CD8-positive, alpha-beta T cell (primary cell): ENCODE measurements at regions of chr13 and their contacts with region 1.

Region 1: GRCh38 chr13:46126552-46127357 is 21.9 kb upstream of the CPB2 start:
- DNase-seq: peak; percentile 45 to 82 (median 72)
- ATAC-seq: peak; percentile 95
- H3K4me3 ChIP-seq: no peak overlapping the region
- H3K4me3 Mint-ChIP-seq: no peak overlapping the region
- H3K27ac ChIP-seq: peak overlapping the region in 1 of 2 experiments; percentile 69
- H3K27ac Mint-ChIP-seq: peak overlapping the region; percentile 77
- H3K4me1 ChIP-seq: peaks cover 30% of the 10 kb centered on the region
- H3K4me1 Mint-ChIP-seq: peaks cover 55% of the 10 kb centered on the region
- H3K27me3 ChIP-seq: no peaks in the 10 kb centered on the region
- H3K27me3 Mint-ChIP-seq: no peaks in the 10 kb centered on the region
- CTCF ChIP-seq: peak; percentile 80

Region 2: GRCh38 chr13:45511310-45512097 is 615.3 kb before region 1 on chr13:
- CTCF ChIA-PET with region 1: no interaction called
- POLR2A ChIA-PET with region 1: no interaction called
- intact Hi-C with region 1: loop called (anchors 5 to 10 kb)
- DNase-seq: peak in 5 of 9 experiments; percentile 20 to 80 (median 26)
- ATAC-seq: peak; percentile 95
- H3K4me3 ChIP-seq: no peak overlapping the region
- H3K4me3 Mint-ChIP-seq: no peak overlapping the region
- H3K27ac ChIP-seq: no peak overlapping the region
- H3K27ac Mint-ChIP-seq: peak overlapping the region; percentile 52
- H3K4me1 ChIP-seq: no peaks in the 10 kb centered on the region
- H3K4me1 Mint-ChIP-seq: peaks cover 8% of the 10 kb centered on the region
- H3K27me3 ChIP-seq: no peaks in the 10 kb centered on the region
- H3K27me3 Mint-ChIP-seq: no peaks in the 10 kb centered on the region
- CTCF ChIP-seq: peak; percentile 85

Region 3: GRCh38 chr13:45807520-45808099 is 319.1 kb before region 1 on chr13:
- CTCF ChIA-PET with region 1: interaction called, 5 read pairs
- POLR2A ChIA-PET with region 1: no interaction called
- intact Hi-C with region 1: loop called (anchors 1 to 2 kb)
- DNase-seq: peak in 4 of 9 experiments; percentile 26 to 54 (median 39)
- ATAC-seq: peak; percentile 54
- H3K4me3 ChIP-seq: no peak overlapping the region
- H3K4me3 Mint-ChIP-seq: no peak overlapping the region
- H3K27ac ChIP-seq: no peak overlapping the region
- H3K27ac Mint-ChIP-seq: no peak overlapping the region
- H3K4me1 ChIP-seq: no peaks in the 10 kb centered on the region
- H3K4me1 Mint-ChIP-seq: peaks cover 6% of the 10 kb centered on the region
- H3K27me3 ChIP-seq: no peaks in the 10 kb centered on the region
- H3K27me3 Mint-ChIP-seq: no peaks in the 10 kb centered on the region
- CTCF ChIP-seq: peak; percentile 16

Region 4: GRCh38 chr13:46109451-46109850 is 17.3 kb before region 1 on chr13:
- CTCF ChIA-PET with region 1: interaction called, 3 read pairs
- POLR2A ChIA-PET with region 1: no interaction called
- intact Hi-C with region 1: loop called in 1 of 2 experiments (anchors 2 kb)
- DNase-seq: no peak
- ATAC-seq: no peak
- H3K4me3 ChIP-seq: no peak overlapping the region
- H3K4me3 Mint-ChIP-seq: no peak overlapping the region
- H3K27ac ChIP-seq: no peak overlapping the region
- H3K27ac Mint-ChIP-seq: no peak overlapping the region
- H3K4me1 ChIP-seq: peaks cover 3% of the 10 kb centered on the region
- H3K4me1 Mint-ChIP-seq: peaks cover 9% of the 10 kb centered on the region
- H3K27me3 ChIP-seq: no peaks in the 10 kb centered on the region
- H3K27me3 Mint-ChIP-seq: peaks cover 20% of the 10 kb centered on the region
- CTCF ChIP-seq: no peak

Region 5: DNA sequence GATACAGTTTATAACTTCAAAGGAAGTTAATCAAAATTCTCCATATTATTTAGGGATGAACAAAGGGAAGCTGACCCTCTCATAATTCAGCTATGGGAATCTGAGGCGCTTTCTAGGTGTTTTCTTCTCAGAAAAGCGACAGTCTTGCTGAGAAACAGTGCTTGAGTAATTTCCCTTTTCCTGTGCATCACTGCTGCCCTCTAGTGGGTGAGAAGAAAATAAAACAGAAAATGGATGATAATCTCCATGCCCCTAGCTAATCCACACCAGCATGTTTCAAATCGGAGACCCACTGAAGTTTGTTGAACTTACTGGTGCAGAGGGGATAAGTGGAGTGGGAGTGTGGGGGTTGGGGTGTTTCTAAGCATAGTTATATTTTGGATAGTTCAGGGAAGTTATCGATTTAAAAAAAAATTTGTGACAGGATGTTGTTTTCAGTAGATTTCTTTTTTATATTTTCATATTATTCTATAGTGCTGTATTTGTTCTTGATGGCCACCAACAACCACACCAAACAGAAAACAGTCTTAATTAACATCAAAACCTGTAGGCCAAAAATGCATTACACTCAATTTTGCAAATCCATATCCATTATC is 33.8 kb after region 1 on chr13:
- CTCF ChIA-PET with region 1: interaction called, 4 read pairs
- POLR2A ChIA-PET with region 1: interaction called, 4 read pairs
- intact Hi-C with region 1: loop called in 1 of 2 experiments (anchors 5 kb)
- DNase-seq: peak in 3 of 9 experiments; percentile 41 to 92 (median 85)
- ATAC-seq: peak; percentile 76
- H3K4me3 ChIP-seq: no peak overlapping the region
- H3K4me3 Mint-ChIP-seq: peak overlapping the region; percentile 73
- H3K27ac ChIP-seq: peak overlapping the region in 1 of 2 experiments; percentile 77
- H3K27ac Mint-ChIP-seq: peak overlapping the region; percentile 94
- H3K4me1 ChIP-seq: peaks cover 45% of the 10 kb centered on the region
- H3K4me1 Mint-ChIP-seq: peaks cover 55% of the 10 kb centered on the region
- H3K27me3 ChIP-seq: no peaks in the 10 kb centered on the region
- H3K27me3 Mint-ChIP-seq: no peaks in the 10 kb centered on the region
- CTCF ChIP-seq: peak; percentile 79

Region 6: DNA sequence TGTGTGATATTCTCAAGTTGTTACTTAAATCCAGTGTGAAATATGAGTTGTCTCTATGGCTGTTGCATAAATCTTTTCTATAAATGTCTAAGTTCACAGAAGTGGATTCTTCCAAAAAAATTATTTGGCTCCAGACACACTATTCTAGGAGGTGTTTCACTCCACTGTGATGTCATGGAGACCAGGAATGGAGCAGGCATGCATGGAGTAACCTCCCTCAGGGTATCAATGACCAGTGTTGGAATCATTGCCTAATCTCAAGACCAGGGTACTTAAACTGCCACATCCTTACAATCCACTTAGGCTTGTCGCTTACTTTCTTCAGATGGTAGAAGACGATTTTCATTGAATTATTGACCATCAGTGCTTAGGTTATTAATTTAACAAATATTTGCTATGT is 140.4 kb after region 1 on chr13:
- CTCF ChIA-PET with region 1: no interaction called
- POLR2A ChIA-PET with region 1: no interaction called
- intact Hi-C with region 1: no loop called
- DNase-seq: no peak
- ATAC-seq: no peak
- H3K4me3 ChIP-seq: no peak overlapping the region
- H3K4me3 Mint-ChIP-seq: no peak overlapping the region
- H3K27ac ChIP-seq: no peak overlapping the region
- H3K27ac Mint-ChIP-seq: no peak overlapping the region
- H3K4me1 ChIP-seq: no peaks in the 10 kb centered on the region
- H3K4me1 Mint-ChIP-seq: no peaks in the 10 kb centered on the region
- H3K27me3 ChIP-seq: no peaks in the 10 kb centered on the region
- H3K27me3 Mint-ChIP-seq: peaks cover 7% of the 10 kb centered on the region
- CTCF ChIP-seq: no peak

Region 7: GRCh38 chr13:46721054-46721453 is 594.3 kb after region 1 on chr13:
- CTCF ChIA-PET with region 1: no interaction called
- POLR2A ChIA-PET with region 1: no interaction called
- intact Hi-C with region 1: loop called in 1 of 2 experiments (anchors 10 kb)
- DNase-seq: peak in 8 of 9 experiments; percentile 1 to 67 (median 50)
- ATAC-seq: peak; percentile 38
- H3K4me3 ChIP-seq: no peak overlapping the region
- H3K4me3 Mint-ChIP-seq: no peak overlapping the region
- H3K27ac ChIP-seq: no peak overlapping the region
- H3K27ac Mint-ChIP-seq: no peak overlapping the region
- H3K4me1 ChIP-seq: no peaks in the 10 kb centered on the region
- H3K4me1 Mint-ChIP-seq: no peaks in the 10 kb centered on the region
- H3K27me3 ChIP-seq: no peaks in the 10 kb centered on the region
- H3K27me3 Mint-ChIP-seq: no peaks in the 10 kb centered on the region
- CTCF ChIP-seq: peak; percentile 92